ENCODE measurements at regions of chrX and their contacts with region 1.

Region 1: GRCh38 chrX:70592091-70592490 is 147.5 kb downstream of the DLG3 start:
- DNase-seq: no peak
- H3K4me3 ChIP-seq: no peak overlapping the region
- H3K4me3 Mint-ChIP-seq: no peak overlapping the region
- H3K27ac Mint-ChIP-seq: no peak overlapping the region
- H3K4me1 ChIP-seq: no peaks in the 10 kb centered on the region
- H3K4me1 Mint-ChIP-seq: no peaks in the 10 kb centered on the region
- H3K27me3 ChIP-seq: no peaks in the 10 kb centered on the region
- H3K27me3 Mint-ChIP-seq: no peaks in the 10 kb centered on the region
- CTCF ChIP-seq: no peak

Region 2: GRCh38 chrX:70554081-70554480 is 38.0 kb before region 1 on chrX:
- CTCF ChIA-PET with region 1: no interaction called
- POLR2A ChIA-PET with region 1: no interaction called
- intact Hi-C with region 1: no loop called
- DNase-seq: peak in 1 of 2 experiments; percentile 27
- H3K4me3 ChIP-seq: no peak overlapping the region
- H3K4me3 Mint-ChIP-seq: no peak overlapping the region
- H3K27ac Mint-ChIP-seq: no peak overlapping the region
- H3K4me1 ChIP-seq: peaks cover 4% of the 10 kb centered on the region; the same call in 1 of the 2 replicates
- H3K4me1 Mint-ChIP-seq: peaks cover 14% of the 10 kb centered on the region
- H3K27me3 ChIP-seq: no peaks in the 10 kb centered on the region
- H3K27me3 Mint-ChIP-seq: no peaks in the 10 kb centered on the region
- CTCF ChIP-seq: peak in 1 of 2 experiments; percentile 28

Region 3: GRCh38 chrX:70577442-70577841 is 14.6 kb before region 1 on chrX:
- CTCF ChIA-PET with region 1: no interaction called
- POLR2A ChIA-PET with region 1: no interaction called
- intact Hi-C with region 1: loop called (anchors 1 kb)
- DNase-seq: no peak
- H3K4me3 ChIP-seq: no peak overlapping the region
- H3K4me3 Mint-ChIP-seq: no peak overlapping the region
- H3K27ac Mint-ChIP-seq: no peak overlapping the region
- H3K4me1 ChIP-seq: no peaks in the 10 kb centered on the region
- H3K4me1 Mint-ChIP-seq: no peaks in the 10 kb centered on the region
- H3K27me3 ChIP-seq: no peaks in the 10 kb centered on the region
- H3K27me3 Mint-ChIP-seq: no peaks in the 10 kb centered on the region
- CTCF ChIP-seq: no peak